ENCODE measurements at regions of chr4 and their contacts with region 1.

Region 1: DNA sequence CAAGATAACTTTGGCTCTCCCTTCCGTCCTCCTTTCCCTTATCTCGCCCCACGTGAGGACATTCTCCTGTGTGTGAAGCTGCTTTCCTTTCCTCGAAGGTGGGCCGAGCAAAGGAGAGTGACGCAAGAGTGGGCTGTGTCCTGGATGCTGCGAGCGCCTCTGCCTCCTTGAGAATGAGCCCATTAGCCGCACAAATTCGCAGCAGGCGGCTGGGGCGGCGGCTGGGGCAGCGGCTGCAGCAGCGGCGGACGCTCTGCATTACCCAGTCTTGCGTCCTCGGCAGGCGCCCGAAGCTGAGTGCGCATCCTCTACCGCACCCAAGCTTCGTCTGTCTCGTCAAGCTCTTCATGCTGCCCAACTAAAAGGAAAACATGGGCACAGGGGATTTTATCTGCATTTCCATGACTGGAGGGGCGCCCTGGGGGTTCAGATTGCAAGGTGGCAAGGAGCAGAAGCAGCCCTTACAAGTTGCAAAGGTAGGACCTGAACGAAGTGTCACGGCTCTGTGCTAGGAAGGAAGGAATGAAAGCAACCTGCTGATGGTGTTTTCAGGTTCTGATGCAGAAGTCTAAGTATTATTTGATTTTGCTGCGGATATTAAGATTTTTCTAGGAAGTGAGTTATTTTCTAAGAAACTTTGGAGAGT is at the start of gene SYNPO2:
- DNase-seq: peak; percentile 96
- H3K4me3 ChIP-seq: peak within 1 kb of the TSS; percentile 66 to 76 (median 72)
- H3K27ac ChIP-seq: peak within 1 kb of the TSS; percentile 87 to 90 (median 88)
- H3K4me1 ChIP-seq: peaks cover 0 to 4% (median 1%) of the 10 kb centered on the region in 4 donors
- H3K27me3 ChIP-seq: no peaks in the 10 kb centered on the region
- CTCF ChIP-seq: no peak
- EP300 ChIP-seq: no peak
- POLR2A ChIP-seq: peak; percentile 76
- total RNA-seq, gene SYNPO2: 2,073 to 2,783 (median 2,517) TPM

Region 2: GRCh38 chr4:118740869-118741268 is 147.9 kb before region 1 on chr4:
- intact Hi-C with region 1: loop called (anchors 10 kb)
- DNase-seq: no peak
- H3K4me3 ChIP-seq: peak overlapping the region in 3 of 4 donors; percentile 29 to 35 (median 32)
- H3K27ac ChIP-seq: peak overlapping the region; percentile 64 to 87 (median 80)
- H3K4me1 ChIP-seq: peaks cover 8 to 74% (median 64%) of the 10 kb centered on the region in 4 donors
- H3K27me3 ChIP-seq: no peaks in the 10 kb centered on the region
- CTCF ChIP-seq: peak; percentile 55 to 61 (median 59)
- EP300 ChIP-seq: no peak
- POLR2A ChIP-seq: no peak

Region 3: GRCh38 chr4:118770741-118771187 is 118.0 kb before region 1 on chr4:
- intact Hi-C with region 1: loop called (anchors 2 kb)
- DNase-seq: no peak
- H3K4me3 ChIP-seq: no peak overlapping the region
- H3K27ac ChIP-seq: peak overlapping the region; percentile 76 to 91 (median 82)
- H3K4me1 ChIP-seq: peaks cover 59 to 79% (median 78%) of the 10 kb centered on the region in 4 donors
- H3K27me3 ChIP-seq: no peaks in the 10 kb centered on the region
- CTCF ChIP-seq: no peak
- EP300 ChIP-seq: no peak
- POLR2A ChIP-seq: no peak

Region 4: GRCh38 chr4:118835571-118836300 is 53.1 kb before region 1 on chr4 and contains the start of gene SEC24D:
- intact Hi-C with region 1: loop called (anchors 2 kb)
- DNase-seq: peak; percentile 94
- H3K4me3 ChIP-seq: peak within 1 kb of the TSS; percentile 80 to 98 (median 98)
- H3K27ac ChIP-seq: peak within 1 kb of the TSS; percentile 96 to 99 (median 98)
- H3K4me1 ChIP-seq: peaks cover 16 to 49% (median 48%) of the 10 kb centered on the region in 4 donors
- H3K27me3 ChIP-seq: no peaks in the 10 kb centered on the region
- CTCF ChIP-seq: peak in 2 of 3 experiments; percentile 5 to 8
- EP300 ChIP-seq: no peak
- POLR2A ChIP-seq: peak; percentile 45
- total RNA-seq, gene SEC24D: 29.1 to 41.5 (median 37.0) TPM

Region 5: DNA sequence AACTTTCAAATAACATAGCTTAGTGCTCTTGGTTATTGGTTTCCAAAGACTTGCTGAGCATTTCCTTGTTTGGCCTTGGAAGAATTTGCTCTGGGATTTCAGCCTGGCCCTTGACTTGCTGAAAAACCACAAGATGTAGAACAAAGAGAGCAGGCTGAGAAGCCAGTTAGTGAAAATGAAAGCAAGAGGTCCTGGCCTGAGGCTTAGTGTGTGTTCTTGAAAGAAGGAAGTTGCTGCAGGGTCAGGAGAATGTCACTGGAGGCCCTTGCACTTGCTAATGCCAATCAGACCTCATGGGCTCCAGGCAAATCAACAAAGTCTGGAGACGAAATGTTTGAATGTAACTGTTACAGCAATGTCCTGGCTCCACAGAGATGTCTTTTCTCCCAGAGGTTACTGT is 79.2 kb after region 1 on chr4:
- intact Hi-C with region 1: loop called (anchors 2 kb)
- DNase-seq: peak; percentile 92
- H3K4me3 ChIP-seq: peak overlapping the region; percentile 1 to 26 (median 14)
- H3K27ac ChIP-seq: peak overlapping the region; percentile 79 to 88 (median 84)
- H3K4me1 ChIP-seq: peaks cover 65 to 98% (median 90%) of the 10 kb centered on the region in 4 donors
- H3K27me3 ChIP-seq: no peaks in the 10 kb centered on the region
- CTCF ChIP-seq: no peak
- EP300 ChIP-seq: no peak
- POLR2A ChIP-seq: no peak

Region 6: GRCh38 chr4:119510395-119511149 is 621.8 kb after region 1 on chr4:
- intact Hi-C with region 1: no loop called
- DNase-seq: no peak
- H3K4me3 ChIP-seq: no peak overlapping the region
- H3K27ac ChIP-seq: peak overlapping the region; percentile 78 to 85 (median 80)
- H3K4me1 ChIP-seq: peaks cover 0 to 82% (median 68%) of the 10 kb centered on the region in 4 donors
- H3K27me3 ChIP-seq: no peaks in the 10 kb centered on the region
- CTCF ChIP-seq: no peak
- EP300 ChIP-seq: no peak
- POLR2A ChIP-seq: no peak

Region 7: GRCh38 chr4:119570401-119570800 is 681.6 kb after region 1 on chr4:
- intact Hi-C with region 1: no loop called
- DNase-seq: no peak
- H3K4me3 ChIP-seq: peak overlapping the region in 1 of 4 donors; percentile 14
- H3K27ac ChIP-seq: peak overlapping the region; percentile 58 to 72 (median 70)
- H3K4me1 ChIP-seq: peaks cover 0 to 64% (median 47%) of the 10 kb centered on the region in 4 donors
- H3K27me3 ChIP-seq: no peaks in the 10 kb centered on the region
- CTCF ChIP-seq: no peak
- EP300 ChIP-seq: no peak
- POLR2A ChIP-seq: no peak

Measured in esophagus muscularis mucosa (tissue), 4 donors.